ENCODE measurements at regions of chr15 and their contacts with region 1.

Region 1: DNA sequence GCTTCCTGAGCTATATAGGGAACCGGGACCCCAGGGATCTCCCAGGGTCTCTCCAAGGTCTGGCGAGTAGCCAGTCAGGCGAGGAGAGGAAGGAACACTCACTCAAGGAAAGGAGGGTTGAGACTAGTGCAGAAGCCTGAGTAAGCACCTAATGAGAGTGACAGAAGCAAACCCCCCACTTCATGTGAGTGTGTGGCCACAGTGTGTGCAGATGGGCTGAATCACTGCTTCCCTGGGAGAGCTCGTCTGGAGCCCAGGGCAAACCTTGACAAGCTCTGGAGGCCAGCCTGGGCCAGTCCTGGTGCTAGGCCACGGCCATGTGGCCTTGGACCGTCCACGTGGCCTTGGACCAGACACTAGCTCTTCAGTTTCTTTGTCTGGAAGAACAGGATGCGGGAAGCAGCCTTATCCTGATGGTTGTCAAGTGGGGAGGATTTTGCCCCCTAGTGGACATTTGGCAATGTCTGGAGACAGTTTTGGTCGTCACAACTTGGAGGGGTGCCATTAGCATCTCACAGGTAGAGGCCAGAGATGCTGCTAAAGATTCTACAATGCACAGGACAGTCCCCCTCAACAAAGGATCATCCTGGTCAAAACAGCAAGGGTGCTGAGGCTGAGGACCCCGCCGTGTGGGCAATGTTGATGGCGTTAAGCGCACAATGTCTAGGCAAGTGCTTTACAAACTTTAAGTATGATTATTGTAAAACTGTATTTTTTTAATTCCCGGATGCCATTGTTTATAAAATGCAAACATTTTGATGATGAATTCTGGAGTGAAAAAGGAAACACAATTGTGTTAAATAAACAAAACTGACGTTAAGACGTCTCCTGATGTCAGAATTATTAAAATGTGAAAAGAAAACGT is 34.8 kb upstream of the CTSH start:
- DNase-seq: peak; percentile 69 to 79
- H3K4me3 ChIP-seq: no peak overlapping the region
- H3K27ac ChIP-seq: no peak overlapping the region
- H3K4me1 ChIP-seq: no peaks in the 10 kb centered on the region; a peak in 2 of 7 replicates
- H3K27me3 ChIP-seq: peaks cover 0 to 13% (median 8%) of the 10 kb centered on the region in 4 experiments; a peak in 3 of 7 replicates
- CTCF ChIP-seq: peak; percentile 75 to 92 (median 82)
- EP300 ChIP-seq: no peak
- POLR2A ChIP-seq: no peak
- RAD21 ChIP-seq: peak; percentile 77 to 87

Region 2: DNA sequence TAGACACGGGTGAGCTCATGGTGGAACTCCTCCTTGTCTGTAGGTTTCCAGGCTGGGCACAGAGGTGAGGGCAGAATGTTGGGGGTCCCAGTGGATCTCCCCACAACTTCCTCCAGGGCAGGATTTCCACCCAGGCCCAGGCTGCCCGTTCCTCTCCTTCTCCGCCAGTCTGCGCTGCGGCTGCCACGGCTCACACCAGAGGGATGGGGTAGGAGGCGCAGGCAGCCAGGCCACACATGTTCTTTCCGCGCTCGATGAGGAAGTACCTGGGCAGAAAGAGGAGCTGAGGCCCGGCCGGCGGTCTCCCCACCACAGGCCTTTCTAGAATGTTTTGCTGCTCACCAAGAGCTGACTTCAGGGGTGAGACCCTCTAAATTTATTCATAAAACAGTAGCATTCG is 57.7 kb before region 1 on chr15:
- CTCF ChIA-PET with region 1: interaction called, 54 read pairs
- POLR2A ChIA-PET with region 1: interaction called, 6 read pairs
- DNase-seq: no peak
- H3K4me3 ChIP-seq: no peak overlapping the region
- H3K27ac ChIP-seq: no peak overlapping the region
- H3K4me1 ChIP-seq: no peaks in the 10 kb centered on the region
- H3K27me3 ChIP-seq: no peaks in the 10 kb centered on the region
- CTCF ChIP-seq: no peak
- EP300 ChIP-seq: no peak
- POLR2A ChIP-seq: no peak
- RAD21 ChIP-seq: no peak

Region 3: DNA sequence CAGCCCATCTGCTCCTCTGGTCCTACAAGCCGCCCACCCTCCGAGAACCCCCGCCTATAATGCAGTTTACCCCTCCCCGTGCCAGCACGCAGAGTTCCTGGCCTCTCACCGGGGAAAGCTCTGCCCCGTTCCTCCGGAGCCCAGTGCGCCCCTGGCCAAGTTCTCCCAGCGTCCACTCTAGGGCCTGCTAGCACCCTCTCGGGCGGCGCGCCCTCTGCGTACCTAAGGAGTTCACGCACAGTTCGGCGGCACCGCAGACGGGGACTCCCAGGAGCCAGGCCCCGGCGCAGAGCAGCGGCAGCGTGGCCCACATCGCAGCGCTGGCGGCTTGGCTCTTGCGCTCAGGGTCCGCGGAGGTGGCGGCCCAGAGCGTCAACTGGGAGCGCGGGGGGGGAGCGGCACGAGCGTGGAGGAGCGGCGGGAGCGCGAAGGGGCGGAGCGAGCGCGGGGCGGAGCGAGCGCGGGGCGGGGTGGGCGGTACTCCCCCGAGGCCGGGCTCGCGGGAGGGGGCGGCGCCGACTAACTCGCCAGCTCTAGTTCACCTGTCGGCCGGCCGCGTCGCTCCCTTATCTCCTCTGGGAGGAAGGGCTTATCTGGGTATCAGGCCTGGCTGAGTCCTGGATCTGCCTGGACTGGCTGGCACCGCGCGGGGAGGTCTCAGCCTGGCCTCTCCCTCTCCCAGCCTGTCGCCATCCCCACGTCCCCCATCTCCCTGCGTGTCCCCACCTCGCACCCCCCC is 34.9 kb before region 1 on chr15 and contains the start of gene CTSH:
- CTCF ChIA-PET with region 1: interaction called, 48 read pairs
- POLR2A ChIA-PET with region 1: interaction called, 3 read pairs
- DNase-seq: peak; percentile 38 to 93
- H3K4me3 ChIP-seq: peak within 1 kb of the TSS; percentile 48 to 66 (median 59)
- H3K27ac ChIP-seq: no peak within 1 kb of the TSS
- H3K4me1 ChIP-seq: peaks cover 0 to 18% (median 10%) of the 10 kb centered on the region in 4 experiments; a peak in 5 of 7 replicates
- H3K27me3 ChIP-seq: peaks cover 0 to 12% (median 11%) of the 10 kb centered on the region in 4 experiments; a peak in 5 of 7 replicates
- CTCF ChIP-seq: 0 out of 4 replicates have a peak, but pooled peaks of 1 of the 3 experiments have one; percentile 16
- EP300 ChIP-seq: 0 out of 3 replicates have a peak, but pooled peaks of 1 of the 2 experiments have one; percentile 32
- POLR2A ChIP-seq: 0 out of 3 replicates have a peak, but pooled peaks of 1 of the 2 experiments have one; percentile 29
- RAD21 ChIP-seq: peak in 1 of 2 experiments; percentile 5; a peak in 1 of 4 replicates
- total RNA-seq, gene CTSH: 31.3 and 34.0 TPM in 2 replicates

Region 4: DNA sequence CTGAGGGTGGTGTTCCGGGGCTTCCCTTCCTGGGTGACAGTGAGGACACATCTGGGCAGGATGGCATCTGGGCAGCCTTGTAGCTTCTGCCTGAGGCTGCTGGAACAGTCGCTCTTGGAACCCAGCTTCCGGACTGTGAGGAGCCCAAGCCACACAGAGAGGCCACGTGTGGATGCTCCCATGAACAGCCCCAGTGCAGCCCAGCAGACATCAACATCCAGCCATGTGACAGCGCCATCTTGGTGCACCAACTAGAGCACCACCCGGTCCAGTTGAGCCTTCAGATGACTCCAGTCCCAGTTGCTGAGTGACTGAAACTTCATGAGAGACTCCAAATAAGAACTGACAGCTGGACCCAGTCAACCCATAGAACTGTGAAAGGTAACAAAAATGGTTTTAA is 19.4 kb before region 1 on chr15:
- CTCF ChIA-PET with region 1: interaction called, 16 read pairs
- POLR2A ChIA-PET with region 1: no interaction called
- DNase-seq: no peak
- H3K4me3 ChIP-seq: no peak overlapping the region
- H3K27ac ChIP-seq: no peak overlapping the region
- H3K4me1 ChIP-seq: no peaks in the 10 kb centered on the region
- H3K27me3 ChIP-seq: no peaks in the 10 kb centered on the region; a peak in 1 of 7 replicates
- CTCF ChIP-seq: no peak
- EP300 ChIP-seq: no peak
- POLR2A ChIP-seq: no peak
- RAD21 ChIP-seq: no peak

Region 5: GRCh38 chr15:78996894-78997275 is 17.2 kb after region 1 on chr15:
- CTCF ChIA-PET with region 1: interaction called, 25 read pairs
- POLR2A ChIA-PET with region 1: no interaction called
- DNase-seq: no peak
- H3K4me3 ChIP-seq: no peak overlapping the region
- H3K27ac ChIP-seq: no peak overlapping the region
- H3K4me1 ChIP-seq: peaks cover 0 to 25% (median 14%) of the 10 kb centered on the region in 4 experiments; a peak in 5 of 7 replicates
- H3K27me3 ChIP-seq: no peaks in the 10 kb centered on the region; a peak in 1 of 7 replicates
- CTCF ChIP-seq: no peak
- EP300 ChIP-seq: no peak
- POLR2A ChIP-seq: no peak
- RAD21 ChIP-seq: no peak

Region 6: DNA sequence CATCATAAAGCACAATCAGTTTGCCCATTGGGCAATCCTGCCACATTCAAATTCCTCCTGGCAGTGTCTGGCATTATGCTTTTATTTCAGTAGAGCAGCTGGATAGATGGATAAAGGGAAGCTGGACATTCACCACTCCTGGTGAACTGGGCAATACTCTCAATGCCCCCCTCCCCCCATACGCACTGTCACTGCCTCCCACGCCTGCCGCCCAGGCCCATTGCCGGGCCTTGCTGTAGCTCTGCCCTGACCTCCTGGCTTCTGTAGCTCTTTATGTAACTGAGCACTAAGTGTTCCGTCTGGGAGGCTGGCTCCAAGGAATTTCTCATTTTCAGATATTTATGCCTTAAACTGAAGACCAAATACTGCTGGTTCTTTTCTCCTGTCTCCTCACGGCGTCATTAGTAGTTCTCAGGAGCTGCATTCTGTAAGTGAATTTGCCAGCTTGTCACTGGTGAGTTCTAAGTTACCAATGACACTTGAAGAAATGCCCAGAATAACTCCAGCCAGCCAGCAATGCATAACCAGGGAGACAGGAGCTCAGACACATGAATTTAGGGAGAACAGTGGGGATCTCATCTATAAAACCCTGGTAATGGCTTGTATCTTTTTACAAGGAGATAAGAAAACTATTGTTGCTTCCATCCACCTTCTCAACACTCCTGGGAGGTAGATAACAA is 136.4 kb after region 1 on chr15:
- CTCF ChIA-PET with region 1: no interaction called
- POLR2A ChIA-PET with region 1: no interaction called
- DNase-seq: peak in 1 of 2 experiments; percentile 17
- H3K4me3 ChIP-seq: no peak overlapping the region
- H3K27ac ChIP-seq: no peak overlapping the region
- H3K4me1 ChIP-seq: no peaks in the 10 kb centered on the region
- H3K27me3 ChIP-seq: no peaks in the 10 kb centered on the region; a peak in 1 of 7 replicates
- CTCF ChIP-seq: no peak
- EP300 ChIP-seq: no peak
- POLR2A ChIP-seq: no peak
- RAD21 ChIP-seq: no peak

Region 7: DNA sequence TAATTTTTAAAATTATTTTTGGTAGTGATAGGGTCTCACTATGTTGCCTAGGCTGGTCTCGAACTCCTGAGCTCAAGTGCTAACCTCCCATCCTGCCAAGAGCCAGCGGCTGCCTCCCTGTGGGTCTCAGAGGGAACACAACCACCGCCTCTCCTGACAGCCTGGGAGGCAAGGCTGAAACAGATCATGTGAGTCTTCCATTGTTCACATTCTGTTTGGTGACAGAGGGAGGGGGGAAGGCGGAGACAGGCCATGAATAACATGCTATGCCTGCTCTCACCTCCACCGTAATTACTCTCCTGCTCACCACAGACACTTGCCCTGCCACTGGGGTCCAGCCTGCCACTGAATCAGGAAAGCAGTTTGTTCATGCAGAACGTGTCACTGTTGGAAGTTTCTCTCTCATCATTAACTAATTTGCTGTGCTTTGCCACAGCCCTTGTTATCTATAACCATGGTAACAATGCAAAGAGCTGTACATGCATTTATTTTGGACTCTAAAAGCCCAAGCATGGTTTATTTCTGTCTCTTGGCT is 189.3 kb after region 1 on chr15:
- CTCF ChIA-PET with region 1: no interaction called
- POLR2A ChIA-PET with region 1: no interaction called
- DNase-seq: peak in 1 of 2 experiments; percentile 58
- H3K4me3 ChIP-seq: no peak overlapping the region
- H3K27ac ChIP-seq: no peak overlapping the region
- H3K4me1 ChIP-seq: peaks cover 2 to 14% (median 6%) of the 10 kb centered on the region in 4 experiments; a peak in 5 of 7 replicates
- H3K27me3 ChIP-seq: no peaks in the 10 kb centered on the region; a peak in 1 of 7 replicates
- CTCF ChIP-seq: peak; percentile 39 to 68 (median 60)
- EP300 ChIP-seq: no peak
- POLR2A ChIP-seq: no peak
- RAD21 ChIP-seq: peak; percentile 59 to 63